Right ventricle myocardium superior (tissue), 1 donor: ENCODE measurements at regions of chr12 and their contacts with region 1.

Region 1: DNA sequence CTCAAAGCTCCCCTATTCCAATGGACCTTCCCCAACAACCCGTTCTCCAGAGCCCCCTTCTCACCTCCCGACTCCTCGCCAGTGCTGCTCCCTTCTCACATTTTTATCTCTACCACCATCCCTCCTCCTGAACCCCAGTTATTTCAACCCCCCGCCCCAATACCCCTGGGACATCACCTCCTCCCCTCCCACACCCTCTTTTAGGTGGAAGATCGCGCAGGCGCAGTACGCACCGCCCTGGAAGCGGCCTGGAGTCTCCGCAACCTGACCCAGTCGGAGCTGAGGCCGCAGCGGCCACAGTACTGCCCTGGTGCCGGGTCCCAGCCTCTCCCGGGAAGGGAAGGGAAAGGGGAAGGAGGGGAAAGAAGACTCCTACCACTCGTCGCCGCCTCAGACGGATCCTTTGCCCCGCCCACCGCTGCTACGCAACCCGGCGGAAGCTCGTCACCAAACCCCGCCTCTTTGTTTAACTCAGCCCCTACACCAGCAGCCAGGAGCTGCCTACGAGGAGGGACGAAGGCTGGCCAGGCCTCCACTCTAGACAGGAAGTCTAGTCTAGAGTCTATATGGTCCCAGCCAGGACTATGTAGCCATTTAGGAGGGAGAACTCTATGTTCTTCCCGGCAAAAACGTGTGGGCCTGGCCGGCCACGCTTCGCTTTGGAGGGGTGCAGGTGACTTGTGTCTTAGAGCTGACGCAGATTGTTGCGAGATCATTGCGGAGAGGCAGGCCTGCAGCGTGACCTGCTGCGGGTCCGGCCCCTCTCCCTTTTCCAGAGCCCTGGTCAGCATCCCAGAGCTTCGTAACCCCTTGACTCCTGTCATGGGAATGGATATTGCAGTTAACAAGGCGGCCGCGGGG is at the start of gene RNF41:
- DNase-seq: peak; percentile 99
- ATAC-seq: peak; percentile 93
- total RNA-seq, gene RNF41: 48.1 TPM

Region 2: GRCh38 chr12:56078990-56079664 is 142.6 kb before region 1 on chr12:
- intact Hi-C with region 1: no loop called
- DNase-seq: peak; percentile 91
- ATAC-seq: peak; percentile 89

Region 3: DNA sequence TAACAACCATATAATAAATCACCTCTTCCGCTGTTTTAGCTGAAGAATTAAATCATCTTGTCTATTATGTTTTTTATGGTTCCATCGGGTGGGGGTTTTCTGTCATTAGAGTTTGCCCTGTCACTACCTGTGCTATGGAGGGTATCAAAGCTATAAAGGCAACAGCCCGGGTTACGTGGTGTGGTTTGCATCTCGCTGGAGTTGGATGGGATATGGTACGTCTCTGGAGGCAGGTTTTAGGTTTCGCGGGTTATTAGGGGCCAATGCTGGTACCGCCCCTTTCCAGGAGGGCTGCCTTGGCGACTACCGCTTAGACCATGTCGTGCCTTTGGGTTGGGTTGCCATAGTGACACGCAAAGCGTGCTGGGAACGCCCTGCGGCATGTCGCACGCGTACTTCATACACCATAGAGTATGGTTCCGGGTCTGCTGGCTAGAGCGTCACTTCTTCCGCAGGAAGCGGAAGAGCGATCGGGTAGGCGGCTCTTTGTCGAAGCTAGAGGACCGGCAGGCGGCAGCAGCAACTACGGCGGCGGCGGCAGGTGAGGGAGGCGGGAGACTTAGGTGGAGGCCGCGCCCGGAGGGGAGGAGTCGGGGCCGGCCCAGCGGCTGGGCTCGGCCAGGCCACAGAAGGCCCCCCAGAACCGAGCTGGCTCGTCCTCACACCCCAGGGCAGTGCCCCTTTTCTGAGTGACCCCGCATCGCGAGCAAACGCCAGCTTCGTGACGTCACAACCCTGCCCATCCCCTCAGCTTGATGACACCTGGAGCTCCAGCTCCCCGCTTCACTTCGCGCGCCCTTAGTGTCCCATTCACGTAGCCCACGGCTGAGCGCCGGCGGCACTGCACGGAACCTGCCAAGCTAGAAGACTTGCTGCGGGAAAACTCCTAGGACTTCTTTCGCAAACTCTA is 103.7 kb before region 1 on chr12 and contains the start of gene ZC3H10:
- intact Hi-C with region 1: loop called (anchors 2 kb)
- DNase-seq: peak; percentile 98
- ATAC-seq: peak; percentile 84
- total RNA-seq, gene ZC3H10: 5.8 TPM